ENCODE measurements at regions of chr2 and their contacts with region 1.

Region 1: GRCh38 chr2:101419096-101419663 is 31.9 kb upstream of the CREG2 start:
- DNase-seq: peak; percentile 52
- H3K4me3 Mint-ChIP-seq: no peak overlapping the region
- H3K27ac Mint-ChIP-seq: no peak overlapping the region
- H3K4me1 Mint-ChIP-seq: no peaks in the 10 kb centered on the region
- H3K27me3 Mint-ChIP-seq: no peaks in the 10 kb centered on the region

Region 2: DNA sequence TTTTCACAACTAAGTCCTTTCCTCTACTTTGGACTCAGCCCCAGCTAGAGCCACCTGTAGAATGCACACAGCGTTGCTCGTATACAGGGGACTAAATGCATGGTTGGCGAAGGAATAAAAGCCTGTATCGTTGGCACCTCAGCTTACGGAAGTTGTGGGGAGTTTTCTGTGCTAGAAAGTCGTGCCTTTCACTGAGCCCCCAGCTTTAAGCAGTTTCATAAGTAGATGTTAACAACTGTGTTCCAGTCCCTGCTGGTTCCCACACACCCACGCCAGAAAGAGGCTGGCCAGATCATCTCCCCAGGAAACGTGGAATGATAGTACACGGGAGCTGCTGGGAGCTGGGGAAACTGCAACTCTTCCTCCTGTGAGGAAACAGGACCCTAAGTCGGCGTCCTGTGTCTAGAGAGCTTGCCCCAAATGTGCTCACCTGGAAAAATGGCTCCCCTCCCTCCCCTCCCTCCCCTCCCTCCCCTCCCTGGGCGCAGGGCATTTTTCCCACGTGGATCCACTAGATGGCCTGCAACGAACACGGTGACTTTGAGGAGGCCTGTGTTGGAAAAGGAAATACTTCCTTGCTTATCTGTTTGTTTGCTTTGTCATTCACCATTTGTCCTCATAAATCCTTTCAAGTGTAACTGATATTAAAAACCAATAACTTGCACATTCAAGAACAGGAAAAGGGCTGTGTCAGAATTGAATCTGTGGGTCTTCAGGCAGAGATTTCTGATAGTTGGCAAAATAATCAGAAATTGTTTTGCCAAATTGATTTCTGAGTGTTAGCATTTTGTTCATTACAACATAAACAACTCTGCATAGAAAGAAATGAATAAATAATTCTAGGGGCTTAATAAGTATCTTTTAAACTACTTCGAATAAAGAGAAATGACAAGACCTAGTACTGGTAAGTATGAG is 99.7 kb after region 1 on chr2:
- intact Hi-C with region 1: loop called (anchors 5 kb)
- DNase-seq: no peak
- H3K4me3 Mint-ChIP-seq: no peak overlapping the region
- H3K27ac Mint-ChIP-seq: no peak overlapping the region
- H3K4me1 Mint-ChIP-seq: peaks cover 51% of the 10 kb centered on the region
- H3K27me3 Mint-ChIP-seq: no peaks in the 10 kb centered on the region

Region 3: DNA sequence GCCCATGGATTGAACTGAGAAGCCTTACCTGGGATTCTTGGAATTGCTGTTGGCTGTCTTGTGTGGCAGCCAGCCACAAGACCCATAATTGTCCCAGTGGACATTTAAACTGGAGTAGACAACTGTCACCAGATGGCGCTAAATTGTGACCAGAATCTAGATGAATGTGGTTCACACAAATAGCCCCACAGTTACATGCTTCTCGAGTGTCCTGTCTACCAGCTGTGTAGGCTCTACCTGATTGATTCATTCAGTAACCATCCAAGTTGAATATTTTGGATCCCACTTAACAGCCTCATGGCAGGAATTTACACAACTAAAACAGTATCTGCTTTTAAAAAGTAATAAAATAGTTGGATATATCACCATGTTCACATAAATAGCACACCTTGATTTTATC is 351.5 kb after region 1 on chr2:
- intact Hi-C with region 1: loop called (anchors 5 kb)
- DNase-seq: no peak
- H3K4me3 Mint-ChIP-seq: no peak overlapping the region
- H3K27ac Mint-ChIP-seq: no peak overlapping the region
- H3K4me1 Mint-ChIP-seq: peaks cover 91% of the 10 kb centered on the region
- H3K27me3 Mint-ChIP-seq: no peaks in the 10 kb centered on the region

Region 4: DNA sequence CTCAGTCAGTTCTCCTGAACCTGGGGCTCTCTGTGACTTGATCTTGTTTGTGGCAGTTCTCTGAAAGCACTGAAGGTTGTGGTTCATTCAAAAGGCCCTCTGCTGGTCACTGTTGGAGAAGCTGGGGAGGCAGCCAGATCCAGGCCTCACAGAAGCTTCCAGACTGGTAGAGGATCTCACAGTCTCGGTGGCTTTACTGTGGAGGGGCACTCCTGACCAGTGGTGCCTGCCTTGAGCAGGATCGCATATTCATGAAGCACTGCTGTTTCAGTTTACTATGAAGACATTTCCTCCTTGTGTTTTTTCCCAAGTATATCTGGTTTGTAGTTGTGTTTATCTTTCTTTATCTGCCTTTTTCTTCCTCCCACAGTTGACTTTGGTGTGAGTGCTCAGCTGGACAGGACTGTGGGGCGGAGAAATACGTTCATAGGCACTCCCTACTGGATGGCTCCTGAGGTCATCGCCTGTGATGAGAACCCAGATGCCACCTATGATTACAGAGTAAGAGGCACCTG is 412.2 kb after region 1 on chr2:
- intact Hi-C with region 1: loop called (anchors 1 kb)
- DNase-seq: peak; percentile 46
- H3K4me3 Mint-ChIP-seq: peak overlapping the region; percentile 32
- H3K27ac Mint-ChIP-seq: peak overlapping the region; percentile 92
- H3K4me1 Mint-ChIP-seq: peaks cover 54% of the 10 kb centered on the region
- H3K27me3 Mint-ChIP-seq: no peaks in the 10 kb centered on the region